Esophagus muscularis mucosa (tissue), 4 donors: ENCODE measurements at regions of chr6 and their contacts with region 1.

Region 1: DNA sequence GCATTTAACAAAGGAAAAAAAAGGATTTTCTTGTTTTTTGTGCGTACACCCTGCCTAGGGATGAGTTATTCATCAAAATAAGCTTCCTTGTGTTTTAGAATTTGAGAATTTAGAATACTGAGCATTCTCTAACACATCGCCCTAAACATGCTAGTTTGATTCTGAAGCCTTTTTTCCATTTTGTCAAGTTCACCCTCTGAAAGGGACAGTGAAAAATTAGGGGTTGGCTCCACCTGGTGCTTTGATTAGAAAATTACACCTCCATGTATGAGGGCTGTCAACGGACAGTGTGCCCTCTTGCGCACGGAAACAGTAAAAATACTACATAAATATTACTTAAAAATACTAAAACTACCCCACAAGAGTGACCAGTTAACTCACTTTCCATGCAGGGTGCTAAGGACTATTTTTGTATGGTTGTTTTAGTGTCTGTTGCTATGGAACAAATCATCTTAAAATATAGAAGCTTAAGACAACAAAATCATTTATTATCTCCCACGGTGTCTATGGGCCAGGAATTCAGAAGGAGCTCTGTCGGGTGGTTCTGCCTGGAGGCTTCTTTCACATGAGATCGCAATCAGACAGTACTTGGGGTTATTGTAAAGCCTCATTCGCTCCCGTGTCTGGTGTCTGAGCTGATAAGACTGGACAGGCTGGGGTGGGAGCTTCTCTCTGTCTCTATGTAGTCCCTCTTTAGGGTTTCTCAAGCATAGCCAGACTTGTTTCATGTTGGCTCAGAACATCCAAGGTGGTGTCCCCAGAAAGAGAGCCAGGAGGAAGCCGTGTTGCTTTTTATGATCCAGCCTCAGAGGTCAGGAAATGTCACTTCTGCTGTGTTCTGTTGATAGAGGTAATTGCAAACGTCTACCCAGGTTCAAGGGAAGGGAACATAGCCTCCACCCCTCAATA is 41.1 kb upstream of the TMEM170B start:
- DNase-seq: no peak
- H3K4me3 ChIP-seq: no peak overlapping the region
- H3K27ac ChIP-seq: peak overlapping the region in 1 of 4 donors; percentile 12
- H3K4me1 ChIP-seq: peaks cover 3 to 18% (median 16%) of the 10 kb centered on the region in 4 donors
- H3K27me3 ChIP-seq: no peaks in the 10 kb centered on the region
- CTCF ChIP-seq: peak; percentile 92 to 96 (median 93)
- EP300 ChIP-seq: no peak
- POLR2A ChIP-seq: no peak

Region 2: DNA sequence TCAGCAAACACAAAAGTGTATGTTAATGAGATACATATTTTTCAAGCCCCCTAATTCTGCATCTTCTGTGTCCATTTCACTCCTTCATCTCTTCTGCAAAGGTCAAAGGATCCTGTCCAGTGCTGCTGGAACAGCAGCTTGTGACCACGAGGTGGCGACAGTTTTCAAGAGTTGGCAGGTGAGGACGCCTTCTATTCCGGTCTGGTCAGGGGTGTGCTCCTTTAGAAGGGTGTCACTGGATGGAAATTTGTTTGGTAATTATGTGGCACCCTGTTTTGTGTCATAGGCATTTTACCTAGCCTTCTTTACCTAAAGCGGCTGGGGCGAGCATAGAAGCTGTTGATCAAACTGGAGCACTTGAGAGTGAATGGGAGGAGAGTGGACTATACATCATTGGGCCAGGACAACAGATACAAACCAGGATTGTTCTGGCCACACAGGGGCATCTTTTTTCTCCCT is 352.0 kb before region 1 on chr6:
- intact Hi-C with region 1: loop called (anchors 2 kb)
- DNase-seq: no peak
- H3K4me3 ChIP-seq: no peak overlapping the region
- H3K27ac ChIP-seq: no peak overlapping the region
- H3K4me1 ChIP-seq: peaks cover 0 to 5% (median 4%) of the 10 kb centered on the region in 4 donors
- H3K27me3 ChIP-seq: no peaks in the 10 kb centered on the region
- CTCF ChIP-seq: peak; percentile 86 to 90 (median 89)
- EP300 ChIP-seq: no peak
- POLR2A ChIP-seq: no peak

Region 3: DNA sequence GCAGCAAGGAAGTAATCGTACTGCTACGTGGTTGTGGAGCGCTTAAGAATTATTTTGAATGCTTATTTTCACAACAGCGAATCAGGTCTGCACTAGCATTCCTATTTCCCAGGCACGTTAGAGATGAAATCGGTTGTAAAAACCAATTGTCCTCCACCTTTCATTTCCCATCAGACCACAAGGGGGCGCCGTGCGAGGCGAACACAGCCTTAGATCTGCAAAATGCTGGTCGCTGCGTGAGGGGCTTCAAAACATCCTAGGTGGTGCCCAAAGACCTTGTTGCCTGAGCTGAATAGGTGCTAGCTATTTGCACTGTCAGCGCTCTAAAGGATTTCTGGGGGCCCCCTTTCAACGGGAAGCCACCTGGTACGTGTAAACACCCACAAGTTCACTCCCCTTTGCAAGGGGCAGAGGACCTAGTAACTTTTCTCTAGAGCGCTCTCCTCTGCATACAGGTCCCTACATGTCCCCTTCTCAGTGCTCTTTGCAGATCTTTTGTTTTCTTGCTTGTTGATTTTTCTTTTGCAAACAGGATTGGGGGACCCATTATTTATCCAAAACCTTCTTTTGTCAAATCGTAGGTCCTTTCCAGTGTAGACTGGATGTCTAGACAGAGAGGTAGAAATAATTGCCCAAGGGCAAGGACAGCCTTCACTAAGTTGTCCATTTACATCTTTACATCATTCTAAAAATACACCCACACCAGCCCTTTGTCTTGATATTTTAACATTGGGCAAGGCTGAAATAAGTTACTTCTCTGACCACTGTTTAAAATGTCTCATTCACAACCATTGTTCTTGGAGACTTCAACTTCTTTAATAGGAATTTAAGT is 323.7 kb before region 1 on chr6:
- intact Hi-C with region 1: loop called (anchors 1 kb)
- DNase-seq: no peak
- H3K4me3 ChIP-seq: no peak overlapping the region
- H3K27ac ChIP-seq: no peak overlapping the region
- H3K4me1 ChIP-seq: peaks cover 6 to 10% (median 9%) of the 10 kb centered on the region in 4 donors
- H3K27me3 ChIP-seq: no peaks in the 10 kb centered on the region
- CTCF ChIP-seq: peak; percentile 74 to 86 (median 76)
- EP300 ChIP-seq: no peak
- POLR2A ChIP-seq: no peak

Region 4: GRCh38 chr6:11236076-11236750 is 260.2 kb before region 1 on chr6:
- intact Hi-C with region 1: loop called (anchors 5 kb)
- DNase-seq: no peak
- H3K4me3 ChIP-seq: no peak overlapping the region
- H3K27ac ChIP-seq: no peak overlapping the region
- H3K4me1 ChIP-seq: peaks cover 0 to 29% (median 25%) of the 10 kb centered on the region in 4 donors
- H3K27me3 ChIP-seq: no peaks in the 10 kb centered on the region
- CTCF ChIP-seq: no peak
- EP300 ChIP-seq: no peak
- POLR2A ChIP-seq: no peak

Region 5: DNA sequence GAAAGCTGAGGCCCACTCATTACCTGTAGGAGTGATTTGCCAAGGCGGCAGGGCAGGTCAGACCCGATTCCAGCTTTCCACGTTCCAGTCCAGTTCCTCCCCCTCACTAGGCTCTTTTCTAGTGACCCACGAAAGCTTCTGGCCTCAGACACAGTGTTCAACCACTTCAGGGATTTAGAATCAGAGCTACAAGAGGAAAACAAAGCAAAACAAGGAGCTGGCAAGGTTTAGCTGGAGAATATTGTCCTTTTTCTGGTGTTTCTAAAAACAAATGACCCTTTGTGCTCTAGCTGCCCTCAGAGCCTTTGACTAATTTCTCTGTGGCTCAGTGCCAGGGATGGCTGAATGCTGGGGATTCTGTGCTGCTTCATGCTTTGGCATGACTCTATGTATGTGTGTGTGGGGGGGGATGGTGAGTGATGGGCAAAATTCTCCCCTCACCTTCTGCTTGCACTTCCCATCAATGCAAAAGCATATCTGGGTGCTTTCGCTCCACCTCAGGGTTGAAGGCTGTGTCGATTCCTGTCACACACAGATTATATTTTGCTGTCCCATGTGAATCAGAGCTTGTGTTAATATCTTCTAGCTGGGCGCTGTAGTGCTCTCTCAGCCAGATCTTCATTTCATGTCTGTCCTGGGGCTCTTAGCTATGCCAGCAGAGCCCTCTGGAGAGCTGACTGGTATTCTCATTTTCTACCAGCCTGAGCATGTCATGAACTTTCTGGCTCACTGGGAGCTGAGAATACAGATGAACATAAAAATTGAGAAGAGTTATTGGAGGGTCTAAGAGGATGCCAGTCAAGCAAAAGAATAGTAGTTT is 244.7 kb before region 1 on chr6:
- intact Hi-C with region 1: loop called (anchors 5 kb)
- DNase-seq: no peak
- H3K4me3 ChIP-seq: peak overlapping the region in 1 of 4 donors; percentile 1
- H3K27ac ChIP-seq: peak overlapping the region; percentile 64 to 72 (median 68)
- H3K4me1 ChIP-seq: peaks cover 19 to 23% (median 21%) of the 10 kb centered on the region in 4 donors
- H3K27me3 ChIP-seq: no peaks in the 10 kb centered on the region
- CTCF ChIP-seq: no peak
- EP300 ChIP-seq: no peak
- POLR2A ChIP-seq: no peak

Region 6: DNA sequence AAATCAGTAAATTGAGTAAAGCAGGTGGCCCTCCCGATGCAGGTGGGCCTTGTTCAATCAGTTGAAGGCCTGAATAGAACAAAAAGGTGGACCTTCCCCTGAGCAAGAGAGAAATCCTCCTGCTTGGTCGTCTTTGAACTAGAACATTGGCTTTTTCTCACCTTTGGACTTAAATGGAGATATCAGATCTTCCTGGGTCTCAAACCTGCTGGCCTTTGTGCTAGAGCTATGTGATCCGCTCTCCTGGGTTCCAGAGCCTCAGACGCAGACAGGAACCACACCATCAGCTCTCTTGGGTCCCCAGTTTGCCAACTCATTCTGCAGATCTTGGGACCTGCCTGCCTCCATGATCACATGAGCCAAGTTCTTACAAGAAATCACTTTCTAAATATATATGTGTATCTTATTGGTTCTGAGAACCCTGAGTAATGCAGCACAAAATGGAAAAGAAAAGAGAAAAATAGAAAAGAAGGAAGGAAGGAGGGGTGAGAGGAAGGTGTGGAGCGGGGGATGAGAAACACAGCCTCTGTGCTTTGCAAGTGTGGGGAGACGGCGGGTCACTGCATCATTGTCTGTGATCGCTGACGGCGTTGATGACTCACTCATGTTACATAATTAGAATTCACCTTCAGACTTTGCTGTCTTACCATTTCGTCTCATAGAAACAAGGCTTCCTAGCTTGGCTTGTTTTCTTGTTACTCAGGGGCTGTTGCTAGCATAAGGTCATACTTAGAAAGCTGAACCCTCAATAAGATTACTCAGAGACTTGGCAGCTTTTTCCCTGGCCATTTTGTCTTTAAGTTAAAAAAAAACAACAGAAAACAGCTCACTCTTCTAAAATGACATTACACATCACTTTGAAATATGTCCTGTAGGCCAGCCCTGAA is 178.3 kb before region 1 on chr6:
- intact Hi-C with region 1: loop called (anchors 10 kb)
- DNase-seq: peak; percentile 89
- H3K4me3 ChIP-seq: no peak overlapping the region
- H3K27ac ChIP-seq: peak overlapping the region; percentile 1 to 65 (median 57)
- H3K4me1 ChIP-seq: peaks cover 9 to 20% (median 16%) of the 10 kb centered on the region in 4 donors
- H3K27me3 ChIP-seq: no peaks in the 10 kb centered on the region
- CTCF ChIP-seq: no peak
- EP300 ChIP-seq: no peak
- POLR2A ChIP-seq: no peak

Region 7: DNA sequence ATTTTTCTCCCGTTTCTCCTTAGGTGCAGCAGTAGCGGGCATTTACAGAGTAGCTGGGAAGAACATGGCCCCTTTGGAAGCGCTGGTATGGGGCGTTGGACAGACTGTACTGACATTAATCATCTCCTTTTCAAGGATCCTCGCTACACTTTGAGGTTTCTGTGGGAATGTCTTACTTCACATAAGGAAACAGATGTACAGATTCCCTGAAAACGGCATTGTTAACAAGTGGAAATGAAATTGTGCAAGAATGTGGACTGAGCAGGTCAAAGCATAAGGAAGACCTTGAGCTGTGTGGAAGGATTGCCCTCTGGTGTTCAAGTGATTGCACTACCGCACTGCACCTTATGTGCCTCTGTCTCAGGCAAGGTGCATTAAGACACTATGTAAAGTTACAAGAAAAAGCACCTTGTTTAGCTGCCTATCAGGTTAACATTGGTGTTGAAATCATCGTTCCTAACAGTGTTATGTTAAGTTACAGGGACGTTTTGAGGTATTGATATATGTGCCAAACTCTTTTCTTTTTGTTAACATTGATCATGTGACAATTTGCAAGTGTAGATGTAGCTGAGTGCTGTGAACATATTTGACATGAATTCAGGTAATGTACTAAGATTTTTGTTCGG is 79.1 kb after region 1 on chr6:
- intact Hi-C with region 1: loop called (anchors 10 kb)
- DNase-seq: no peak
- H3K4me3 ChIP-seq: peak overlapping the region in 1 of 4 donors; percentile 13
- H3K27ac ChIP-seq: no peak overlapping the region
- H3K4me1 ChIP-seq: peaks cover 0 to 4% (median 0%) of the 10 kb centered on the region in 4 donors
- H3K27me3 ChIP-seq: no peaks in the 10 kb centered on the region
- CTCF ChIP-seq: peak; percentile 79 to 92 (median 84)
- EP300 ChIP-seq: no peak
- POLR2A ChIP-seq: no peak